Sciatic nerve (tissue), 2 donors: ENCODE measurements at regions of chr7 and their contacts with region 1.

Region 1: GRCh38 chr7:105257338-105257737 is 131.4 kb downstream of the SRPK2 start:
- DNase-seq: no peak
- ATAC-seq: no peak

Region 2: GRCh38 chr7:105187302-105188169 is 69.8 kb before region 1 on chr7:
- intact Hi-C with region 1: no loop called
- DNase-seq: no peak
- ATAC-seq: no peak

Region 3: DNA sequence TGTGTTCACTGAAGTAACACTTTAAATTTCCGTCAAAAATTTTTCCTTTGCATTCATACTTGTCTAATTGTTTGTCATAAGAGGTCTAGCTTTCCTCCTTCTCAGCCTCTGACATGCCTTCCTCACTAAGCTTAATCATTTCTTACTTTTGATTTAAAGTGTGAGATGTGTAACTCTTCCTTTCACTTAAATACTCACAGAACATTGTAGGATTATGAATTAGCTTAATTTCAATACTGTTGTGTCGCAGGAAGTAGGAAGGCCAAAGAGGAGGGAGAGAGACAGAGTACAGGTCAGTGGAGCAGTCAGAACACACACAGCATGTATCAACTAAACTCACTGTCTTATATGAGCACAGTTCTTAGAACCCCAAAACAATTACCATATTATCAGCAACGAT is 32.4 kb after region 1 on chr7:
- intact Hi-C with region 1: loop called (anchors 2 kb)
- DNase-seq: no peak
- ATAC-seq: no peak

Region 4: DNA sequence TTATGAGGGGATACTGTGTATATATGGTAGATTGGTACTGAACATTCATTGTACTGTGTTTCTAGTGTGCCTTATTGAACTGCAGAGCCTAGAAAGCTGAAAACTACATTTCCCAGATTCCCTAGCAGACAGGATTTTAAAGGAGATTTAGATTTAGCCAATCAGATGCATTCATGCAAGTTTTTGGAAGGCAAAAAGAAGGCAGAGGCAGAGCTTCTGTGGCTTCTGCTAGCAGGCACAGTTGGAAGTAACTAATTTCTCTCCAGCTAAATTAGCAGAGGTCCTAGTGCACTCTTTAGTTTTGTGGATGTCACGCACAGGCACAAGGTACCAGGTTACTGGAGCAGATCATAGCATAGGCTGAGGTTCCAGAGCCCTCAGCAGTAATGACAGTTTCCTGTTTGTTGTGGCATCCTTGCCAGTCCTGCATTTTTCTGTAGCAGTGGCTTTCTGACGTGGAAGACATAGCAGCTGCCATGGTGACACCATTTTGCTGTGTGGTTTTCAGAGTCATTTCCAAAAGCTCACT is 1487.3 kb after region 1 on chr7:
- intact Hi-C with region 1: no loop called
- DNase-seq: no peak
- ATAC-seq: no peak